Adrenal gland (tissue), 19 donors: ENCODE measurements at regions of chr14 and their contacts with region 1.

Region 1: DNA sequence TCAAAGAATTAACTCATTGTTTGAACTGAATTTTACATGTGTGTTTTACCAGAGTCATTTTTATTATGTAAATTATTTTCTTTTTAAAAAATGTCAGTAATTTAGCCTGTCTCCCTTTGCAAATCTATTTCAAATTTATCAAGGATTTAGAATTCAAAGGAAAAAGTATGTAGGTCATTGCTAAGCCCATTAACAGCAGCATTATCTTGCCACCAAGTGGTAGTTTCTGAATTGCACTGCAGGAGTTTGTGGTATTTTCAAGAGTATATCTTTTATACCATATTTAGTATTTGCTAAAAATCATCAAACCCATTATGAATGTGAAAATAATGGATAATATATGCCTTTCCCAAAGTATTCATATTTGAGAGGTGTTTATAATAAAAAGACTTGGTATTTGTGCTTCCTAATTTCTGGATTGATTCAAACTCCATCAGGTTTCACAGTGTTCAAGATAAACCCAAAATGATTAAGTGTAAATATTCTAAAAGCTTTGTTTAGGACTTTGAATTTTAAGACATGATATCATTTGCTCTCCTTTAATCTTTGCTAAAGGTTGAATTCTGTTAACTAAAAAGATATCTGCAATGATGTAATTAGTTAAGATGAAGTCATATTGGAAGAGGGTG is 711.4 kb downstream of the FSCB start:
- DNase-seq: peak in 1 of 7 donors; percentile 15
- H3K4me3 ChIP-seq: no peak overlapping the region
- H3K27ac ChIP-seq: no peak overlapping the region
- H3K4me1 ChIP-seq: no peaks in the 10 kb centered on the region
- H3K27me3 ChIP-seq: no peaks in the 10 kb centered on the region
- CTCF ChIP-seq: peak; percentile 26 to 73 (median 59)
- POLR2A ChIP-seq: no peak

Region 2: DNA sequence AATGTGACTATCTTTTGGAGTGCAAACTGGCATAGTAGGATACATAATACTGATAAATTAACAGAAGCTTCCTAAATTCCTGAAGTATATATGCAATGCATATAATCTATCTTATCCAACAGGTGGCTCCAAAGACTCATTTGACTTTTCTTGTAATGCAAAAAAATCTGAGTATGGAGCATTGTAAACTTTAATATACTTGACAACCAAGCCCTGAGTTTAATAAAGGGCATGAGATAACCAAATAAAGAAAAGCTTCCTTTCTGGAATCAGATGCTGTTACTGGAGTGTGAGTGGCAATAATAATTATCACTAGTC is 292.2 kb before region 1 on chr14:
- intact Hi-C with region 1: loop called in 1 of 2 experiments (anchors 10 kb)
- DNase-seq: no peak
- H3K4me3 ChIP-seq: no peak overlapping the region
- H3K27ac ChIP-seq: no peak overlapping the region
- H3K4me1 ChIP-seq: no peaks in the 10 kb centered on the region
- H3K27me3 ChIP-seq: no peaks in the 10 kb centered on the region
- CTCF ChIP-seq: peak in 3 of 6 experiments; percentile 9 to 31 (median 26)
- POLR2A ChIP-seq: no peak